Activated CD4-positive, alpha-beta T cell treated with anti-CD3 and anti-CD28 coated beads for 36 hours (primary cell): ENCODE measurements at regions of chr17 and their contacts with region 1.

Region 1: GRCh38 chr17:74203439-74204240 is at the start of gene RPL38:
- DNase-seq: peak; percentile 98
- ATAC-seq: peak; percentile 83
- H3K4me3 Mint-ChIP-seq: peak within 1 kb of the TSS; percentile 100
- H3K27ac Mint-ChIP-seq: peak within 1 kb of the TSS; percentile 100
- H3K4me1 Mint-ChIP-seq: peaks cover 44% of the 10 kb centered on the region
- H3K27me3 Mint-ChIP-seq: peaks cover 11% of the 10 kb centered on the region
- total RNA-seq, gene RPL38: 1,648 to 1,818 TPM

Region 2: GRCh38 chr17:74190172-74190571 is 13.5 kb before region 1 on chr17:
- CTCF ChIA-PET with region 1: interaction called, 54 read pairs
- POLR2A ChIA-PET with region 1: interaction called, 3 read pairs
- intact Hi-C with region 1: no loop called
- DNase-seq: no peak
- ATAC-seq: peak; percentile 90
- H3K4me3 Mint-ChIP-seq: no peak overlapping the region
- H3K27ac Mint-ChIP-seq: no peak overlapping the region
- H3K4me1 Mint-ChIP-seq: no peaks in the 10 kb centered on the region
- H3K27me3 Mint-ChIP-seq: peaks cover 11% of the 10 kb centered on the region

Region 3: DNA sequence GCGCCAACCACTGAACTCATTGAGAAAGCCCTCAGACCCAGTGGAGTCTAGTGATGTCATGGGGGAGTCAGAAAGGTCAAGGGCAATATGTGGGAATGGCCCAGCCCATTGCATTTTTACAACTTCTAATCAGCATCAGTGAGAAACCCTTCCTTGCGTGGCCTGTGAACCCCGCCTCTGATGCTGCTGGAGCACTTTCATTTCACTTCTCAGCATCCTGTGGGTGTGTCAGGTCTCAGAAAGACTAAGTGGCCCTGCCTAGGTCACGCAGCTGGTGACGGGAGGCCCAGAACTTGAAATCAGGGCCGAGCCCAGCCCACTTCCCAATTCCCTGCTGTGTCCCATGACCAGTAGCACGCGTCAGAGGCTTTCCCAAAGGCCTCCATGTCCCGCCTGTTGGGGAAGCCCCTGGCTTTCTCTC is 76.5 kb after region 1 on chr17:
- CTCF ChIA-PET with region 1: no interaction called
- POLR2A ChIA-PET with region 1: interaction called, 6 read pairs
- intact Hi-C with region 1: loop called in 1 of 2 experiments (anchors 2 kb)
- DNase-seq: peak; percentile 75
- ATAC-seq: peak; percentile 80
- H3K4me3 Mint-ChIP-seq: no peak overlapping the region
- H3K27ac Mint-ChIP-seq: peak overlapping the region; percentile 74
- H3K4me1 Mint-ChIP-seq: peaks cover 38% of the 10 kb centered on the region
- H3K27me3 Mint-ChIP-seq: no peaks in the 10 kb centered on the region